ENCODE measurements at regions of chr12 and their contacts with region 1.

Region 1: GRCh38 chr12:89019408-89020120 is 332.7 kb downstream of the DUSP6 start:
- DNase-seq: peak; percentile 52
- CTCF ChIP-seq: peak; percentile 92

Region 2: DNA sequence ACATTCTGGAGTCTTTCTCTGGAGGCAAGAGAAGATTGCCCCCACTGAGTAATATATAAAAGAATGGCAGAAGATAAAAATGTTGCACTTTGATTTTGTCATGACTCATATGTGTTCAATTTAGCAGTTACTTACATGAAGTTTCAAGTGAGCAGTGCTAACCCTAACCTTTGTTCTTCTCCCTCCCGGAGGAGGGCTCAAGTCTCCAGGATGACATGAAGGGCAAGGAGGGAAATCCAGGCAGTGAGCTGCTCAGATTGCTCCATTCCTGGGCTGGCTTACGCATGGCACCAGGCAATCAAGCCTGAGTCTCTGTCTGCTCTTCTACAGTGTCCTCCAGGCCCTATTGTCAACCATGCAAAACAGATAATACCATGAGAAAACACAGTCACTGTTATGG is 10.4 kb after region 1 on chr12:
- CTCF ChIA-PET with region 1: interaction called, 12 read pairs
- POLR2A ChIA-PET with region 1: no interaction called
- DNase-seq: no peak
- CTCF ChIP-seq: no peak

Region 3: DNA sequence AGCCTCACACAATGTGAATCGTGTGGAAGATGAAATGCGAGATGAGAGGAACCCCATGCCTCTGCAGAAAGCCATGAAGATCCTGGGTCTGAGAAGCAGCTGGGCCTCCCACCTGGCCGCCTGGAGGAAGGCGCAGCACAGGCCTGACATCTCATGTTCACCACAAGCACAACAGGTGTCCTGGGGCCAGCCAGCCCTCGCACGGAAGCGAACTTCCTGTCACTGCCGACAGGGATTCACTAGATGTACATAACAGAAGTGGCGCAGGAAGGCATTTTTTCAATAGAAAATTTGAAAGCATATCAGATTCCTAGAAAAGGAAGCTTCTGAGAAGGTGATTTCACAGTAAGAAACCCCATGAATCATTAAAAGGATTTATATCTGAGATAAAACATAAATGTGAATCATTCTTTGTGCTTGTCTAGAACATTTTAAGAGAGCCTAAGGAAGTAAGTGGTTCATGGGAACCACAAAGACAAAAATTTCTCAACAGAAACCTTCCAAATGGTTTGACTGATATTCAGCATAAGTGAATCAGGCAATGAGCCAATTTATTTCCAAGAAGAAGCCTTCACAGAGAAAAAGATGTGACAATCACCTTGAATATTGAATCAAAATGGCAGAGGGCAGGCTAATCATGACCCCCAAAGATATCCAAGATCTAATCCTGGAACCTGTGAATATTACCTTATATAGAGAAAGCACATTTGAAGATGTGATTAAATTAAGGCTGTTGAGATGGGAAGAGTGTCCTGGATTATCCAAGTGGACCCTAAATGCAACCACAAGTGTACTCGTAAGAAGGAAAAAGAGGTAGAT is 20.8 kb after region 1 on chr12:
- CTCF ChIA-PET with region 1: interaction called, 11 read pairs
- POLR2A ChIA-PET with region 1: no interaction called
- DNase-seq: peak; percentile 53
- CTCF ChIP-seq: no peak

Region 4: DNA sequence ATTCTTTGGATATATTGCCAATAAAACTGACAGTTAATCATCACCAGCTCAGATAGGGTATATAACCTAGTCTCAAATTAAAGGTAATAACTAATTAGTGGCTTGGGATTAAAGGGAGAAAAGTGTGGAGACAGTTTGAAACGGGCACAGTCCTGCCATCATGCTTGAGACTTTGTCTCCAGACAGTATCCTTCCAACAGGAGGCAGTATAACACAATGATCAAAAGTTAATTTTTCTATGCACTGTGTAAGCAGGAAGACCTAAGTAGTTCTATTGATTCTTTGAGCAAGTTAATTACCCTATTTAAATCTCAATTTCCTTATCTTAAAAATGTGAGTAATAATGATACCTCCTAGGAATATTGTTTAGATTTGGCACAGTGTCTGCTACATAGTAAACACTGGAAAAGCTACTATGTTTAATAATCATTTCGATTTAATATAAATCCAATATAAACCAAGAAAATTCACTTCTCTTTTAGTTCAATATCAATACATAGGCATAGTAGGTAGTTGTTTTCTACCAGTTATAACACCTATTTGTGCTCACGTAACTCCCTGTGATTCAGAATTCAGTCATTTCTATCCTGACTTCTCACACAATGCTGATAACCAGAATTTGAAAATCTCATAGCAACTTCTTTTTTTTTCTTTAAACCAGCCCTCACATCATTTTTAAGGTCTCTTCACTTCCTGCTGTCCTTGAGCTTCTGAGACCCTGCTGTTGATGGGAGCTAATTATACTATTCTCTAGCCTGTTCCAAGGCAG is 451.4 kb after region 1 on chr12:
- CTCF ChIA-PET with region 1: interaction called, 31 read pairs
- POLR2A ChIA-PET with region 1: no interaction called
- DNase-seq: peak; percentile 39
- CTCF ChIP-seq: peak; percentile 53

Region 5: DNA sequence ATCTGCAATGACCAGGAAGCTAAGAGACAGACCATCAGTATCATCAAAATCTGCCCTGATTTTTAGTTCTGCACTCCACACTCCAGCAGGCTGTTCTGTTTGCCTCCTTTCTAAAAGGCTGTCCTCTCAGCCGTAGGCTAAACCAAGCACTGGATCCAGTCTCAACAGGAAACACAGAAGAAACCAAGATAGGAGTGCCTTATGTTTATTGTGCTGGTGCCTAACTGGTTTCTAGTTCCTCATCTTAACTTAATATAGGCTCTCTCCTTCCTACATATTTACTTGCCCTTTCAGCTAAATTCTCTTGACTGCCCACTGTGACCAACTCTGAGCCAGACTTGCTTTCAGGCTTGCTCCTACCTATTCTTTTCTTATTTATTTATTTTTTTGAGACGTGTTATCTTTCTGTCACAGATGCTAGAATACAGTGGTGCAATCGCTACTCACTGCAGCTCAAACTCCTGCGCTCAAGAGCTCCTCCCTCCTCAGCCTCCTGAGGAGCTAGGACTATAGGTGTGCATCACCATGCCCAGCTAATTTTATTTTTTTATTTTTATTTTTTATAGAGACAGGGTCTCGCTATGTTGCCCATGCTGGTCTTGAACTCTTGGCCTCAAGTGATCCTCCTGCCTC is 474.2 kb after region 1 on chr12:
- CTCF ChIA-PET with region 1: interaction called, 12 read pairs
- POLR2A ChIA-PET with region 1: no interaction called
- DNase-seq: peak; percentile 12
- CTCF ChIP-seq: no peak

Region 6: DNA sequence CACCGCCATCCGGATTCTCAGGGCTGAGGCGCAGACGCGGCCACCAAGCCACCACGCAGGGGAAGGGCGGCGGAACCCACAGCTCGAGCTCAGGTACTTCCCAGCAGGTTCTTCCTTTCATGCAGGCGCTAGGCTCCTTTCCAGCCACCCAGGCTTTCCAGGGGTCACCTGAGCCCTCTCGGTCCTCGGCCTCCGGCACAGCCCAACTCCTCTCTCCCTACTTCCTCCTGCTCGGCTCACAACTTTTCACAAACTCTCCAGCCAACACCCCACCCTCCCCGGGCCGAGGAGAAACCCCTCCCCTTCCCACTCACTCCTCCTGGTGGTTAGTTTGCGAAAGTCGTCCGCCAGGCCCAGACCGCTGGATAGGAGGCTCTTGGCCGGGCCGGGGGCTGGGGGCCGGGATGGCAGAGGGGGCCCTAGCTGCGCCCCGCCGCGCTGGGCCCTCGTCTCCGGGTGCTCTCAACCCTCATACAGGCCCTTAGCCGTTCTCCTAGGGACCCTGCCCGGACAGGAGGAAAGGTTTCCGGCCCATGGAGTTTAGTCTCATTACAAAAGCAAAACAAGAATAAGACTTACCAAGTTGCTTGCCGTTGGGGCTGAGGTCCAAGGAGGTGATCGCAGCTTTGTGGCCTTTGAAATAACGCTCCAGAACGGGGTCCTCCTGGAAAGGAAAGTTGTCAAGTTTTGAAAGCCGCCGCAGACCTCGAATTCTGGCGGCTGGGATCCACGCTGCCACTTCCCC is 505.1 kb after region 1 on chr12 and contains the start of gene GALNT4:
- CTCF ChIA-PET with region 1: interaction called, 32 read pairs
- POLR2A ChIA-PET with region 1: no interaction called
- DNase-seq: peak; percentile 88
- CTCF ChIP-seq: peak; percentile 66

Measured in GM10248 (cell line).